K562 (cell line): ENCODE measurements at regions of chr3 and their contacts with region 1.

Region 1: DNA sequence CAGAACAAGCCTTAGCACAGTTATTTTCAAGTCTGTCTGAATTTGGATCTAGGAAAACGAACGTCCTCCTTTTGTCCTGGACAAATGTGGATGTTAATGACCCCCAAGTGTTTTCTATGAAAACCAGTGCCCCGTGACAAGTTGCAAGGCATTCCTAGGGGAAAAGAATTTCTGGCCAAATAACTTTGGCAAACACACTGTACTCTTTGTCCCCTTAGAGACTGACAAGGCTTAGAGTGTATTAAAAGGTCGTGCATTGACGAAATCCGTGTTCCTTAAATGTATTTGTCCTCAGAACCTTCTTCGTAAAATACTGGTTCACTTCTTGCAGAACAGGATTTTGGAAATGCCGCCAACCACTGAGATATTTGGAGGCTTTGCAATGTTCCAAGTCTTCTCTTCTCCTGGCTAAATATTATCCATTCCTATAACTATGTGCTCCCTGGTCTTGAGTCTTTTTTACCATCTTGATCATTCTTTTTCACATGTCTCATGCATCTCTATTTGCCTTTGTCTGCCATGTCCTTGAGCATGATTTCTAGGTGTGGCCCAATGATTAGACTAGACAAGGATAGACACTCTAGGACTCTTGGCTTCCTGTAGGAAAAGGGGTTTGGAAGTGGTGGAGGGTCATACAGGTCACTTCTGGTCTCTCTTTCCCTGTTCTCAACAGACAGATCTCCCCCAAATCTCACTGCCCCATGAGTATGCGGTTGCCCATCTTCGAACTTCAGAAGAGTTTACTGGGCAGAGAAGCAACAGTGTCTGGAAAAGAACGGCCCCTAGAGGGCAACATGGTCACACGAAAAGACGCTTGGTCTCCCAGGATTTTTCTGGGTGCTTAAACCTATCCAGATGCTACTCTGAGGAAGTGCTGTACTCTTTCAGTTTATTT is 117.5 kb downstream of the EDEM1 start:
- DNase-seq: peak; percentile 56 to 70 (median 62)
- ATAC-seq: peak; percentile 94
- H3K4me3 ChIP-seq: no peak overlapping the region
- H3K27ac ChIP-seq: no peak overlapping the region
- H3K4me1 ChIP-seq: no peaks in the 10 kb centered on the region
- H3K27me3 ChIP-seq: peaks cover 15 to 19% of the 10 kb centered on the region in 2 experiments
- CTCF ChIP-seq: peak; percentile 69 to 87 (median 86)
- EP300 ChIP-seq: no peak
- POLR2A ChIP-seq: no peak
- RAD21 ChIP-seq: peak; percentile 92 to 94

Region 2: GRCh38 chr3:5226783-5227182 is 78.3 kb before region 1 on chr3:
- CTCF ChIA-PET with region 1: no interaction called
- POLR2A ChIA-PET with region 1: no interaction called
- in situ Hi-C with region 1: no loop called
- intact Hi-C with region 1: loop called (anchors 2 kb)
- DNase-seq: peak in 2 of 4 experiments; percentile 39 to 41
- ATAC-seq: peak; percentile 46; the same call in 2 of the 3 replicates
- H3K4me3 ChIP-seq: no peak overlapping the region
- H3K27ac ChIP-seq: no peak overlapping the region
- H3K4me1 ChIP-seq: peaks cover 0 to 3% of the 10 kb centered on the region in 2 experiments; a peak in 2 of 5 replicates
- H3K27me3 ChIP-seq: peaks cover 29 to 47% of the 10 kb centered on the region in 2 experiments; a peak in 3 of 5 replicates
- CTCF ChIP-seq: peak; percentile 40 to 87 (median 56); a peak in 5 of 6 replicates
- EP300 ChIP-seq: no peak
- POLR2A ChIP-seq: no peak
- RAD21 ChIP-seq: peak; percentile 76 to 89